HepG2 (cell line): ENCODE measurements at regions of chr1 and their contacts with region 1.

Region 1: GRCh38 chr1:162056043-162056442 is 13.4 kb upstream of the NOS1AP start:
- DNase-seq: peak; percentile 70
- ATAC-seq: peak; percentile 98
- H3K4me3 ChIP-seq: no peak overlapping the region
- H3K27ac ChIP-seq: no peak overlapping the region
- H3K4me1 ChIP-seq: peaks cover 16% of the 10 kb centered on the region
- H3K27me3 ChIP-seq: no peaks in the 10 kb centered on the region
- CTCF ChIP-seq: peak; percentile 96
- EP300 ChIP-seq: no peak
- POLR2A ChIP-seq: no peak
- RAD21 ChIP-seq: peak; percentile 96

Region 2: DNA sequence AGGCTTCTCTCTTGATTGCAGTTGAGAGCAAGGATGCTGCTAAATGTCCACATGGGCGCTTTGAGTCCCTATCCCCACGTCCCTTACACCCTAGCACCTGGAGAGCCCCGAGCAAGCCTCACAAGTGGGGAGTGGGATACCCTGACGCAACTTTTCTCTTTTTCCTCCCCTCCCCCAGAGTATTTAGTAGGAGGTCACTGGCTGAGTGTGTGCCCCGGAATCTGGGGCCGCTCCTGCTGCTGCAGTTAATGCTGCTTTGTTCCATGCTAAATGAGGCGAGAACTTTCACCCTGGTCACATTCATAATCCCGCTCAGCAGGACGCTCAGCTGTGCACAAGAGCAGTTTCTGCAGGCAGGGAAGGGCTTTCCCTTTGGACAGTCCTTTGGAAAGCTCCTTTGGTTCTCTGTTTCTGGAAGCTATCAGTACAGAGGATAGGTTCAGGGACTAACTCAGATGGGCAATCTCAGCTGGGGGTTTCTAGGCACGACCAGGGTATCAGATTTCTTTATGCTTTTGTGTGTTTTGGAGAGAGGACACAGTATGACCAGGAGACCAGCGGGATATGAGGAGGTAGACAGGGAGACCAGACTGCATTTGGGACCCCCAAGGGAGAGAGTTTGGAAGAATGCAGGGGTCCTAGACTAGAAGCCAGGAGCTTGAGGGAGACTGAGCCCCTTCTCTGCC is 89.4 kb after region 1 on chr1:
- CTCF ChIA-PET with region 1: no interaction called
- POLR2A ChIA-PET with region 1: no interaction called
- in situ Hi-C with region 1: loop called (anchors 5 kb)
- intact Hi-C with region 1: no loop called
- DNase-seq: peak; percentile 56
- ATAC-seq: peak; percentile 87
- H3K4me3 ChIP-seq: peak overlapping the region; percentile 27 to 63 (median 43)
- H3K27ac ChIP-seq: peak overlapping the region; percentile 85
- H3K4me1 ChIP-seq: peaks cover 85% of the 10 kb centered on the region
- H3K27me3 ChIP-seq: no peaks in the 10 kb centered on the region
- CTCF ChIP-seq: no peak
- EP300 ChIP-seq: no peak
- POLR2A ChIP-seq: no peak
- RAD21 ChIP-seq: no peak

Region 3: DNA sequence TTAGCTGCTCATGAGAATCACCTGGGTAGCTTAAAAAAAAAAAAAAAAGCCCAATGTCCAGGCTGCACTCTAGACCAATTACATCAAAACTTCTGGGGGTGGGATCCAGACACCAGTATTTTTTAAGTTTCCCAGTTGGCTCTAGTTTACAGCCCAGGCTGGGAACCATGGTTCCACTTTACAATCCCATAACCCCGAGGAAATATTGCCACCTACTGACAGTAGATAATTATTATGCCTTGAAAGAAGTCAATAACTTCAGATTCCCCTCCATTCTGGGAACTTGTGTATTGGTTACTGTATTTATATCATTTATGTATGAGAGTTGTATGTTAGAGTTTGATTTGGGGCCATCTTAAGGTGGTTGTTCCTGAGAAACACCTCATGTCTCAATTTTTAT is 220.4 kb after region 1 on chr1:
- CTCF ChIA-PET with region 1: interaction called, 37 read pairs
- POLR2A ChIA-PET with region 1: interaction called, 4 read pairs
- in situ Hi-C with region 1: loop called (anchors 5 kb)
- intact Hi-C with region 1: loop called (anchors 1 kb)
- DNase-seq: peak; percentile 50
- ATAC-seq: peak; percentile 79
- H3K4me3 ChIP-seq: no peak overlapping the region
- H3K27ac ChIP-seq: no peak overlapping the region
- H3K4me1 ChIP-seq: no peaks in the 10 kb centered on the region
- H3K27me3 ChIP-seq: no peaks in the 10 kb centered on the region
- CTCF ChIP-seq: peak; percentile 69
- EP300 ChIP-seq: no peak
- POLR2A ChIP-seq: no peak
- RAD21 ChIP-seq: peak; percentile 67; the same call in 1 of the 2 replicates

Region 4: DNA sequence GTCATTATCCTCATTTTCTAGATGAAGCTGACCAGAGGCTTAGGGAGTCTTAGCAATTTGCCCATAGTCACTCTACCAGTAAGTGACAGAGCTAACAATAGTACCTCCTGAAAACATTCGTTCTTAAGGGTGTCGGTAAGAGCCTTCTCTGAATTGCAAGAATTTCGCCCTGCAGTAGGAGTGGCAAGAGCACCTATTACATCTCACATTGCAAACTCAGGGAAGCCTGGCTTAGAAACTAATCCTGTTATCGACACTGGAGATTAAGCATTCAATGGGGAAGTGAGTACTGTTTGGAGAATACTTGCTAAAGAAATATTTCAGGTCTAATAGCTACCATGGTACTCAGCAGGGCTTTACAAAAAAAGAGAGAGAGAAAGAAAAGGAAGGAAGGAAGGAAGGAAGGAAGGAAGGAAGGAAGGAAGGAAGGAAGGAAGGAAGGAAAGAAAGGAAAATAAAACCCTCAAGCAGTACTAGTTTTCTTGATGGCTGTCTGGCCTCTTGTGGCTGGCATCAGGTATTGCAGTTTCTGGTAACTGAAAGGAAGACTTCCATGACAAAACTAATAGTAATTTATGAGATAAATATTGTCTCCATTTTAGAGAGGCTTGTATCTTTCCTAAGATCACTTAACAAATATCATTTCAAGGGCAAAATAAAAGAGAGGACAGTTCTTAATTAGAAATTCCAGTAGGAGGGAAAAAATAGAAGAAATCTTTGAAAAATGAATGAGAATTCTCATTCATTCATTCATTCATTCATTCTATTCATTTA is 335.9 kb after region 1 on chr1:
- CTCF ChIA-PET with region 1: interaction called, 10 read pairs
- POLR2A ChIA-PET with region 1: no interaction called
- in situ Hi-C with region 1: loop called (anchors 5 kb)
- intact Hi-C with region 1: loop called (anchors 1 kb)
- DNase-seq: peak; percentile 28
- ATAC-seq: 0 out of 3 replicates have a peak, but pooled peaks have one; percentile 18
- H3K4me3 ChIP-seq: no peak overlapping the region
- H3K27ac ChIP-seq: no peak overlapping the region
- H3K4me1 ChIP-seq: peaks cover 21% of the 10 kb centered on the region
- H3K27me3 ChIP-seq: no peaks in the 10 kb centered on the region
- CTCF ChIP-seq: peak; percentile 79
- EP300 ChIP-seq: no peak
- POLR2A ChIP-seq: no peak
- RAD21 ChIP-seq: peak; percentile 19; the same call in 1 of the 2 replicates

Region 5: GRCh38 chr1:162497723-162498500 is 441.9 kb after region 1 on chr1 and contains the start of gene UHMK1:
- CTCF ChIA-PET with region 1: no interaction called
- POLR2A ChIA-PET with region 1: no interaction called
- in situ Hi-C with region 1: no loop called
- intact Hi-C with region 1: loop called (anchors 5 kb)
- DNase-seq: peak; percentile 89
- ATAC-seq: peak; percentile 100
- H3K4me3 ChIP-seq: peak within 1 kb of the TSS; percentile 91 to 95 (median 94)
- H3K27ac ChIP-seq: peak within 1 kb of the TSS; percentile 81
- H3K4me1 ChIP-seq: peaks cover 21% of the 10 kb centered on the region
- H3K27me3 ChIP-seq: no peaks in the 10 kb centered on the region; a peak in 2 of 5 replicates
- CTCF ChIP-seq: no peak
- EP300 ChIP-seq: no peak
- POLR2A ChIP-seq: peak; percentile 63 to 86
- RAD21 ChIP-seq: no peak
- total RNA-seq, gene UHMK1: 20.0 and 27.9 TPM in 2 replicates

Region 6: DNA sequence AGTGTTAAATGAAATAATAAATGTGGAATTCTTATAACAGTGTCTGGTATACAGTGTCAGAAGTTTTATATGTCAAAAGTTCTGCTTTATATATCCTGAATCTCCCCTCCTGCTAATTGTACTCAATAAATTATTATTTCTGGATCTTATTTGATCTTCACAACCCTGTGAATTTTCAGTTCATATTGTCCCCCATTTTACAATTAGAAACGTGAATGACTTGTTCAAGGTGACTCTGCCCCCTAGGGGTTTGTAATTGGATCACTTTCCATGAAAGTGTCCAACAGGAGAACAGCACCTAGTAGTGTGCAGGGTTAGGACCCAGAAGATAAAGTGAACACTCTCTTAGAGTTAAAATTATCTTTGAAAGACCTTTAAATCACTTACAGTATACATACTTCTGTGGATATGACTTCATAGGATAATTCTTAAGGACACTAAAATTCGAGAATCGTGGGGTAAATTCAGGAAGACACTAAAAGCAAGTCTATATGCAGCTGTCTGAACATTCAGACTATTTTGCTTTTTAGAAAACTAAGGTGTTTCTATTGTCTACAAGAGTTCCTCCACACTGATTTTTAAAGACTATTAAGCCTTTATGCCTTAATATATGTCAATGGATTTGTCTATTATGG is 571.7 kb after region 1 on chr1:
- CTCF ChIA-PET with region 1: no interaction called
- POLR2A ChIA-PET with region 1: no interaction called
- in situ Hi-C with region 1: no loop called
- intact Hi-C with region 1: loop called (anchors 2 kb)
- DNase-seq: peak; percentile 43
- ATAC-seq: peak; percentile 90
- H3K4me3 ChIP-seq: no peak overlapping the region
- H3K27ac ChIP-seq: no peak overlapping the region
- H3K4me1 ChIP-seq: no peaks in the 10 kb centered on the region
- H3K27me3 ChIP-seq: no peaks in the 10 kb centered on the region
- CTCF ChIP-seq: peak; percentile 61
- EP300 ChIP-seq: no peak
- POLR2A ChIP-seq: no peak
- RAD21 ChIP-seq: no peak